IMR-90 (cell line): ENCODE measurements at regions of chr16 and their contacts with region 1.

Region 1: GRCh38 chr16:3400779-3401688 is at the starts of genes ZNF174 and ZSCAN32:
- DNase-seq: peak; percentile 99
- ATAC-seq: peak; percentile 98
- H3K4me3 ChIP-seq: peak within 1 kb of the TSS; percentile 73
- H3K27ac ChIP-seq: peak within 1 kb of the TSS; percentile 66
- H3K4me1 ChIP-seq: peaks cover 4% of the 10 kb centered on the region
- H3K27me3 ChIP-seq: no peaks in the 10 kb centered on the region
- CTCF ChIP-seq: no peak
- POLR2A ChIP-seq: peak; percentile 74
- RAD21 ChIP-seq: no peak
- total RNA-seq, gene ZNF174: 5.3 and 7.2 TPM in 2 replicates
- total RNA-seq, gene ZSCAN32: 10.0 and 16.5 TPM in 2 replicates

Region 2: DNA sequence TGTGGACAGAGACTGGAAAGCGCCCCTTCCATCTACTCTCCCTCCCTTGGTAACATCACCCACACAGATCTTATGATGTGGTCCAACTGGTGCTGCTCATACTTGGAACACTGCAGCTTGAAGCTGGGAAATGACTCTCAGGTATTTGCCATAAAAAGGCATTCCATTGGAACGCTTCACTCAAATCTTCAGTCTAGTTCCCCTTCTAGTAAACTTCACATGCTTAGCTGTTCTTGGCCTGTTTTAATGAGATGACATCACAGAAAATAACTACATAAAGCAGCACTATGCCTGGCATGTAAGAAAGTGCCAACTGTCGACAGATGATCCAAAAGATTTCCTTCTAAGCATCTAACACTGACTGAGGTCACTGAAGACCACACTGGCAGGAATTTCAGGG is 108.4 kb before region 1 on chr16:
- CTCF ChIA-PET with region 1: no interaction called
- POLR2A ChIA-PET with region 1: no interaction called
- dilution Hi-C with region 1: no loop called
- in situ Hi-C with region 1: no loop called
- intact Hi-C with region 1: no loop called
- DNase-seq: peak; percentile 77
- ATAC-seq: peak; percentile 70
- H3K4me3 ChIP-seq: no peak overlapping the region
- H3K27ac ChIP-seq: peak overlapping the region; percentile 7; the same call in 1 of the 2 replicates
- H3K4me1 ChIP-seq: no peaks in the 10 kb centered on the region
- H3K27me3 ChIP-seq: no peaks in the 10 kb centered on the region
- CTCF ChIP-seq: no peak
- POLR2A ChIP-seq: no peak
- RAD21 ChIP-seq: no peak

Region 3: GRCh38 chr16:3305109-3306068 is 95.6 kb before region 1 on chr16 and contains the starts of genes TIGD7 and ZNF75A:
- CTCF ChIA-PET with region 1: no interaction called
- POLR2A ChIA-PET with region 1: interaction called, 15 read pairs
- dilution Hi-C with region 1: no loop called
- in situ Hi-C with region 1: no loop called
- intact Hi-C with region 1: no loop called
- DNase-seq: peak; percentile 88
- ATAC-seq: peak; percentile 98
- H3K4me3 ChIP-seq: peak within 1 kb of the TSS; percentile 78
- H3K27ac ChIP-seq: peak within 1 kb of the TSS; percentile 92
- H3K4me1 ChIP-seq: no peaks in the 10 kb centered on the region
- H3K27me3 ChIP-seq: no peaks in the 10 kb centered on the region
- CTCF ChIP-seq: 0 out of 2 replicates have a peak, but pooled peaks have one; percentile 4
- POLR2A ChIP-seq: peak; percentile 89
- RAD21 ChIP-seq: no peak
- total RNA-seq, gene TIGD7: 2.7 and 3.9 TPM in 2 replicates
- total RNA-seq, gene ZNF75A: 15.4 and 17.8 TPM in 2 replicates

Region 4: GRCh38 chr16:3457434-3458252 is 56.6 kb after region 1 on chr16:
- CTCF ChIA-PET with region 1: no interaction called
- POLR2A ChIA-PET with region 1: no interaction called
- dilution Hi-C with region 1: no loop called
- in situ Hi-C with region 1: no loop called
- intact Hi-C with region 1: loop called (anchors 2 kb)
- DNase-seq: peak; percentile 87
- ATAC-seq: peak; percentile 92
- H3K4me3 ChIP-seq: peak overlapping the region; percentile 86
- H3K27ac ChIP-seq: peak overlapping the region; percentile 84
- H3K4me1 ChIP-seq: peaks cover 9% of the 10 kb centered on the region
- H3K27me3 ChIP-seq: no peaks in the 10 kb centered on the region
- CTCF ChIP-seq: peak; percentile 59
- POLR2A ChIP-seq: peak; percentile 82
- RAD21 ChIP-seq: peak; percentile 45